ENCODE measurements at regions of chr19 and their contacts with region 1.

Region 1: DNA sequence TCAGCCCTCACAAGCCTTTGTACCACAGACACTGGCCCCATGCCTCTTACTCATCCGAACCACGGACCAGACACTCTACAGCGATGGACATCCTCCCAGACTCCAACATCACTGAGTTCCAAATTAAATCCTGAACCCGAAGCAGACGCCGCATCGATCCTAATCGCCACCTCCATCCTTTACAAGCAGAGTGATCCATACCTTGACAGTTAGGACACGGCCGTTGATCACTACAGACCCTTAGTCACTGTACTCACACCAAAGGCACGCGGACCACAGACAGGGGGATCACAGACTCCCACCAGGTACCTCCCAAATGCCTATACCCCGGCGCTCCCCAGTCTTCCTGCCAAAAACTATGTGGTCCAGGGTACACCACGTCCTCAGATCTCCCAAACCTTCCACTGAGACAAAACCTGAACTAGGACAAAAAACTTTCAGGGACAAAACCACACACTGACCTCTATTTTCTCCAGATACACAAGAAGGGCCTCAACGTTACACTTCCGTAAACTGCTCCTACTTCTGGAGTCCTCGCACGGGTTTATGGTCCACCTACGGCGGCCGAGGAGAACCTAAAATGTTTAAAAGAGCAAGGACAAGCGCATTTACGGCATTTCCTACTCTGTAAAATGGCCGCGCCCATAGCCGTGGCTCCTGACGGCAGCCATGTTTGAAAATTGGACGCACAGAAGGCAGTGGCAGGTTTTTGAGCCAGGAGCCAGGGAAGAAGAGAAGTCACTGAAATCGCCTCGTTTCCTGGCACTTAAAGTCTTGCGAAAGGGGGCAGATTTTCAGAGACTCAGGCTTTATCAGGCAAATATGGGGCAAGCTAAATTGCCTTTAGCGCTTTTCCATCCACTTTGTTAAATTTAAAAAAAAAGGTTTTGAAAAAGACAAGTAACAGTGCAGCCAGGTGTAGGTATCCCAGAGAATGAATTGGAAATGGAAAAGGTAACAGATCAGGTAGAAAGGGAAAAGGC is at the start of gene ZNF350:
- DNase-seq: peak; percentile 96
- ATAC-seq: peak; percentile 99
- H3K4me3 ChIP-seq: peak within 1 kb of the TSS; percentile 88 to 100 (median 99)
- H3K4me3 Mint-ChIP-seq: peak within 1 kb of the TSS; percentile 95
- H3K27ac ChIP-seq: peak within 1 kb of the TSS; percentile 75 to 81
- H3K27ac Mint-ChIP-seq: peak within 1 kb of the TSS; percentile 94
- H3K4me1 ChIP-seq: peaks cover 5 to 15% of the 10 kb centered on the region in 2 donors
- H3K4me1 Mint-ChIP-seq: peaks cover 13% of the 10 kb centered on the region
- H3K27me3 ChIP-seq: no peaks in the 10 kb centered on the region
- H3K27me3 Mint-ChIP-seq: no peaks in the 10 kb centered on the region
- CTCF ChIP-seq: no peak
- total RNA-seq, gene ZNF350: 50.2 and 53.0 TPM in 2 replicates

Region 2: GRCh38 chr19:51904331-51905165 is 82.1 kb before region 1 on chr19 and contains the start of gene ZNF649:
- CTCF ChIA-PET with region 1: no interaction called
- POLR2A ChIA-PET with region 1: no interaction called
- intact Hi-C with region 1: loop called (anchors 1 kb)
- DNase-seq: peak; percentile 90
- ATAC-seq: peak; percentile 95
- H3K4me3 ChIP-seq: peak within 1 kb of the TSS; percentile 66 to 97 (median 91)
- H3K4me3 Mint-ChIP-seq: peak within 1 kb of the TSS; percentile 99
- H3K27ac ChIP-seq: peak within 1 kb of the TSS; percentile 81 to 83
- H3K27ac Mint-ChIP-seq: peak within 1 kb of the TSS; percentile 98
- H3K4me1 ChIP-seq: peaks cover 6 to 15% of the 10 kb centered on the region in 2 donors
- H3K4me1 Mint-ChIP-seq: peaks cover 21% of the 10 kb centered on the region
- H3K27me3 ChIP-seq: peaks cover 0 to 19% (median 3%) of the 10 kb centered on the region in 4 experiments
- H3K27me3 Mint-ChIP-seq: peaks cover 24% of the 10 kb centered on the region
- CTCF ChIP-seq: no peak
- total RNA-seq, gene ZNF649: 35.7 and 36.3 TPM in 2 replicates

Region 3: GRCh38 chr19:52007806-52008557 is 21.4 kb after region 1 on chr19 and contains the start of gene ZNF615:
- CTCF ChIA-PET with region 1: no interaction called
- POLR2A ChIA-PET with region 1: no interaction called
- intact Hi-C with region 1: loop called (anchors 1 kb)
- DNase-seq: peak; percentile 94
- ATAC-seq: peak; percentile 94
- H3K4me3 ChIP-seq: peak within 1 kb of the TSS; percentile 68 to 90 (median 76)
- H3K4me3 Mint-ChIP-seq: peak within 1 kb of the TSS; percentile 92
- H3K27ac ChIP-seq: peak within 1 kb of the TSS; percentile 78 to 88
- H3K27ac Mint-ChIP-seq: peak within 1 kb of the TSS; percentile 98
- H3K4me1 ChIP-seq: peaks cover 9 to 12% of the 10 kb centered on the region in 2 donors
- H3K4me1 Mint-ChIP-seq: peaks cover 17% of the 10 kb centered on the region
- H3K27me3 ChIP-seq: no peaks in the 10 kb centered on the region
- H3K27me3 Mint-ChIP-seq: no peaks in the 10 kb centered on the region
- CTCF ChIP-seq: no peak
- total RNA-seq, gene ZNF615: 16.8 and 24.5 TPM in 2 replicates

Region 4: GRCh38 chr19:52028027-52028779 is 41.6 kb after region 1 on chr19 and contains the start of gene ZNF614:
- CTCF ChIA-PET with region 1: no interaction called
- POLR2A ChIA-PET with region 1: interaction called, 4 read pairs
- intact Hi-C with region 1: loop called (anchors 1 kb)
- DNase-seq: peak; percentile 93
- ATAC-seq: peak; percentile 85
- H3K4me3 ChIP-seq: peak within 1 kb of the TSS; percentile 91 to 97 (median 93)
- H3K4me3 Mint-ChIP-seq: peak within 1 kb of the TSS; percentile 90
- H3K27ac ChIP-seq: peak within 1 kb of the TSS; percentile 97
- H3K27ac Mint-ChIP-seq: peak within 1 kb of the TSS; percentile 93
- H3K4me1 ChIP-seq: peaks cover 5 to 13% of the 10 kb centered on the region in 2 donors
- H3K4me1 Mint-ChIP-seq: peaks cover 25% of the 10 kb centered on the region
- H3K27me3 ChIP-seq: no peaks in the 10 kb centered on the region
- H3K27me3 Mint-ChIP-seq: no peaks in the 10 kb centered on the region
- CTCF ChIP-seq: no peak
- total RNA-seq, gene ZNF614: 12.3 and 14.3 TPM in 2 replicates